Activated CD4-positive, alpha-beta memory T cell treated with anti-CD3 and anti-CD28 coated beads for 36 hours (primary cell): ENCODE measurements at regions of chr1 and their contacts with region 1.

Region 1: GRCh38 chr1:6602669-6603237 is at the start of gene KLHL21:
- DNase-seq: peak; percentile 93
- H3K4me3 Mint-ChIP-seq: peak within 1 kb of the TSS; percentile 91
- H3K27ac Mint-ChIP-seq: peak within 1 kb of the TSS; percentile 97
- H3K4me1 Mint-ChIP-seq: peaks cover 20% of the 10 kb centered on the region
- H3K27me3 Mint-ChIP-seq: no peaks in the 10 kb centered on the region
- total RNA-seq, gene KLHL21: 18.1 to 19.4 TPM

Region 2: GRCh38 chr1:5992026-5992813 is 610.5 kb before region 1 on chr1 and contains the start of gene NPHP4:
- CTCF ChIA-PET with region 1: no interaction called
- POLR2A ChIA-PET with region 1: no interaction called
- intact Hi-C with region 1: loop called (anchors 5 kb)
- DNase-seq: peak; percentile 100
- H3K4me3 Mint-ChIP-seq: peak within 1 kb of the TSS; percentile 86
- H3K27ac Mint-ChIP-seq: peak within 1 kb of the TSS; percentile 88
- H3K4me1 Mint-ChIP-seq: peaks cover 21% of the 10 kb centered on the region
- H3K27me3 Mint-ChIP-seq: no peaks in the 10 kb centered on the region
- total RNA-seq, gene NPHP4: 14.0 to 14.6 TPM

Region 3: DNA sequence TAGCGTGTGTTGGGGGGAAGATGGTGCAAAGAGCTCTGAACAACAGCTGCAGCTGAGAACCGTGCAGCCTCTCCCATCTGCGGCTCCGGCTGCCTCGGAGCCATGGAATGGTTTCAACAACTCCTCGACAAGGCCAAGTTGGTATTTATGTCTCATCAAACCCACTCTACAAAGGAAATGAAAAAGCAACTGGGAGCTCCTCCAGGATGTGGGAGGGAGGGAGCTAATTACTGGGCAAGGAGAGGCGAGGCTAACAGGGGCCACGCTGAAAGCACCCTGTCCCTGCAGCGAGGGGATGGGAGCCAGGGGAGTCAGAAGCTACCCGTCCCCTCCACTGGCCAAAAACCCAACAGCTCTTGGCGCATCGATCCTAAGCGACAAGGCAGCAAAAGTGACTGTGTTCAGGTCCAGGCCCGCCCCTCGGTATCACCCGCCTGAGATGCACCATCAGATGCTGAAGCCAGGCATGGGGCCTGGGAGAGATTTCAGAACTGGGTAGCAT is 272.3 kb before region 1 on chr1:
- CTCF ChIA-PET with region 1: no interaction called
- POLR2A ChIA-PET with region 1: no interaction called
- intact Hi-C with region 1: no loop called
- DNase-seq: no peak
- H3K4me3 Mint-ChIP-seq: no peak overlapping the region
- H3K27ac Mint-ChIP-seq: no peak overlapping the region
- H3K4me1 Mint-ChIP-seq: no peaks in the 10 kb centered on the region
- H3K27me3 Mint-ChIP-seq: no peaks in the 10 kb centered on the region

Region 4: DNA sequence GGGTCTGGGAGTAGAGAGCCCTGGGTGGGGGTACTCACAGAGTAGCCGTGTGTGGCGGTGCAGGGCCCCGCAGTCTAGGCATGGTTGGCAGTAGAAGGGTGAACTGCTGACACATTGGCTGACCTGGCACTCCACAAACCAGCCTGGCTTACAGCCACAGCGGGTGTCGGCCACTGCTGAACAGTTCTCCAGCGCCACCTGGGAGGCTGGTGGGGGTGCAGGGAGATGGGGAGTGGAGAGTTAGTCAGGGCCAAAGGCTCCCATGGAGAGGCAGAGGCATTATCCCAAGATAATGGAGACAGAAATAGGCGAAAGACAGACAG is 138.3 kb before region 1 on chr1:
- CTCF ChIA-PET with region 1: no interaction called
- POLR2A ChIA-PET with region 1: interaction called, 8 read pairs
- intact Hi-C with region 1: loop called (anchors 2 kb)
- DNase-seq: peak; percentile 83
- H3K4me3 Mint-ChIP-seq: peak overlapping the region; percentile 82
- H3K27ac Mint-ChIP-seq: peak overlapping the region; percentile 83
- H3K4me1 Mint-ChIP-seq: peaks cover 54% of the 10 kb centered on the region
- H3K27me3 Mint-ChIP-seq: no peaks in the 10 kb centered on the region

Region 5: DNA sequence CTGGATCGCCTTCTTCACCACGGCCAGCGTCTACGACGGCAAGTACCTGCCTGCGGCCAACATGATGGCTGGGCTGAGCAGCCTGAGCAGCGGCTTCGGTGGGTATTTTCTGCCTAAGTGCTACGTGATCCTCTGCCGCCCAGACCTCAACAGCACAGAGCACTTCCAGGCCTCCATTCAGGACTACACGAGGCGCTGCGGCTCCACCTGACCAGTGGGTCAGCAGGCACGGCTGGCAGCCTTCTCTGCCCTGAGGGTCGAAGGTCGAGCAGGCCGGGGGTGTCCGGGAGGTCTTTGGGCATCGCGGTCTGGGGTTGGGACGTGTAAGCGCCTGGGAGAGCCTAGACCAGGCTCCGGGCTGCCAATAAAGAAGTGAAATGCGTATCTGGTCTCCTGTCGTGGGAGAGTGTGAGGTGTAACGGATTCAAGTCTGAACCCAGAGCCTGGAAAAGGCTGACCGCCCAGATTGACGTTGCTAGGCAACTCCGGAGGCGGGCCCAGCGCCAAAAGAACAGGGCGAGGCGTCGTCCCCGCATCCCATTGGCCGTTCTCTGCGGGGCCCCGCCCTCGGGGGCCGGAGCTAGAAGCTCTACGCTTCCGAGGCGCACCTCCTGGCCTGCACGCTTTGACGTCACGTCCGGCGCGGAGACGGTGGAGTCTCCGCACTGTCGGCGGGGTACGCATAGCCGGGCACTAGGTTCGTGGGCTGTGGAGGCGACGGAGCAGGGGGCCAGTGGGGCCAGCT is 23.2 kb before region 1 on chr1 and contains the start of gene ZBTB48:
- CTCF ChIA-PET with region 1: interaction called, 3 read pairs
- POLR2A ChIA-PET with region 1: interaction called, 9 read pairs
- intact Hi-C with region 1: loop called (anchors 1 kb)
- DNase-seq: peak; percentile 98
- H3K4me3 Mint-ChIP-seq: peak within 1 kb of the TSS; percentile 94
- H3K27ac Mint-ChIP-seq: peak within 1 kb of the TSS; percentile 87
- H3K4me1 Mint-ChIP-seq: peaks cover 35% of the 10 kb centered on the region
- H3K27me3 Mint-ChIP-seq: no peaks in the 10 kb centered on the region
- total RNA-seq, gene ZBTB48: 24.6 to 28.1 TPM

Region 6: GRCh38 chr1:6624710-6625583 is 22.2 kb after region 1 on chr1 and contains the start of gene THAP3:
- CTCF ChIA-PET with region 1: interaction called, 3 read pairs
- POLR2A ChIA-PET with region 1: interaction called, 7 read pairs
- intact Hi-C with region 1: loop called (anchors 1 kb)
- DNase-seq: peak; percentile 93
- H3K4me3 Mint-ChIP-seq: peak within 1 kb of the TSS; percentile 91
- H3K27ac Mint-ChIP-seq: peak within 1 kb of the TSS; percentile 71
- H3K4me1 Mint-ChIP-seq: peaks cover 25% of the 10 kb centered on the region
- H3K27me3 Mint-ChIP-seq: no peaks in the 10 kb centered on the region
- total RNA-seq, gene THAP3: 22.8 TPM

Region 7: DNA sequence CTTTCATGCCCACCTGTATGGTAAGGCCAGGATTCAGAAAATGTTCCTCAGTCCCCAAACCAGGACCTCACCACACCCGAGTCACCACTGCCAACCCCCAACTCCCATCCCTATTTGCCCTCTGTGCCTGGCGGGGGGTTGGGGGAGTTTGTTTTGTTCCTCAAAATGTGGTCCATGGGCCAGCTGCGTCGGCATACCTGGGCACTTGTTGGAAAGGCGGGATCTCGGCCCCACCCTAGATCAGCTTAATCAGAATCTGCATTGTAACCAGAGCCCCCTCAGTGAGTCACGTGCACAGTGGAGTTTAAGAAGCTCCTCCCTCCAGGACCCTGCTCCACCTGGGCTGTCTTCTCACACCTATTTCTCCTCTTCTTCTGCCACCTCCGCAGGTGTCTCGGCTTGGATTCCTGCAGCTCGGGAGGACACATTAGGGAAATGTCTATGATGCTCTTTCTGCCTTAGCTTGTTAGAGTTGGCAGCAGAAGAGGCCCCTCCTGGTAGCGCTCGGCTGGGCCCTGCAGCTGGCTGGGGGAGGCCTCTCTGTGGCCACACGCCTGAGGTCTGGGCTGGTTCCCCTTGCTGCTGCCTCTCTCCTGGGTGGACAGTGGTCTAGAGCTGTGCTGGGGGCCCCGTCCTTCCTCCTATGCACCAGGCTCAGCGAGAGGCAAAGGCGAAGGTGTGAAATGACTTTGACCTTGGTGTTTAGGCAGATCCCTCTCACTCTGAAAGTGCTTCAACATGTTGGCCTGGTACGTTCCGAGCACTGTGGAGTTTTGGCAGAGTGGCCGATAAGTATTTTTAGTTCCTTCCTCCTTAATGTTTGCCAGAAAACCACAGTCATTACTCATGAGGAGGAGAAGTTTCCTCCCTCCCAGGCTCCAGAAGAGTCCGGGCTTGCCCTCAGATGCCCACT is 140.7 kb after region 1 on chr1:
- CTCF ChIA-PET with region 1: no interaction called
- POLR2A ChIA-PET with region 1: no interaction called
- intact Hi-C with region 1: loop called (anchors 5 kb)
- DNase-seq: peak; percentile 34
- H3K4me3 Mint-ChIP-seq: no peak overlapping the region
- H3K27ac Mint-ChIP-seq: no peak overlapping the region
- H3K4me1 Mint-ChIP-seq: peaks cover 12% of the 10 kb centered on the region
- H3K27me3 Mint-ChIP-seq: peaks cover 25% of the 10 kb centered on the region